CD14-positive monocyte (primary cell): ENCODE measurements at regions of chr9 and their contacts with region 1.

Region 1: GRCh38 chr9:297104-297972 is 82.7 kb downstream of the DOCK8 start:
- DNase-seq: peak; percentile 97 to 99 (median 98)
- H3K4me3 ChIP-seq: peak overlapping the region in 2 of 3 experiments; percentile 55 to 64
- H3K4me3 Mint-ChIP-seq: peak overlapping the region; percentile 80 to 88
- H3K27ac ChIP-seq: peak overlapping the region; percentile 94 to 95
- H3K27ac Mint-ChIP-seq: peak overlapping the region; percentile 97 to 100 (median 99)
- H3K4me1 ChIP-seq: peaks cover 44 to 49% of the 10 kb centered on the region in 2 donors
- H3K4me1 Mint-ChIP-seq: peaks cover 39% of the 10 kb centered on the region
- H3K27me3 ChIP-seq: no peaks in the 10 kb centered on the region
- H3K27me3 Mint-ChIP-seq: no peaks in the 10 kb centered on the region
- CTCF ChIP-seq: no peak

Region 2: GRCh38 chr9:214648-215493 is 82.5 kb before region 1 on chr9 and contains the start of gene DOCK8:
- intact Hi-C with region 1: loop called (anchors 5 kb)
- DNase-seq: peak; percentile 84 to 87 (median 86)
- H3K4me3 ChIP-seq: peak within 1 kb of the TSS; percentile 83 to 97 (median 86)
- H3K4me3 Mint-ChIP-seq: peak within 1 kb of the TSS; percentile 88 to 93
- H3K27ac ChIP-seq: peak within 1 kb of the TSS; percentile 94 to 95
- H3K27ac Mint-ChIP-seq: peak within 1 kb of the TSS in 6 of 7 donors; percentile 94 to 98 (median 97)
- H3K4me1 ChIP-seq: peaks cover 70 to 90% of the 10 kb centered on the region in 2 donors
- H3K4me1 Mint-ChIP-seq: peaks cover 45% of the 10 kb centered on the region
- H3K27me3 ChIP-seq: no peaks in the 10 kb centered on the region
- H3K27me3 Mint-ChIP-seq: no peaks in the 10 kb centered on the region
- CTCF ChIP-seq: peak; percentile 73
- polyA plus RNA-seq, gene DOCK8: 46.8 to 100 (median 95.4) TPM

Region 3: GRCh38 chr9:237858-238345 is 59.4 kb before region 1 on chr9:
- intact Hi-C with region 1: no loop called
- DNase-seq: no peak
- H3K4me3 ChIP-seq: no peak overlapping the region
- H3K4me3 Mint-ChIP-seq: no peak overlapping the region
- H3K27ac ChIP-seq: peak overlapping the region in 1 of 2 donors; percentile 64
- H3K27ac Mint-ChIP-seq: peak overlapping the region in 4 of 7 donors; percentile 5 to 66 (median 32)
- H3K4me1 ChIP-seq: peaks cover 0 to 5% of the 10 kb centered on the region in 2 donors
- H3K4me1 Mint-ChIP-seq: peaks cover 32% of the 10 kb centered on the region
- H3K27me3 ChIP-seq: no peaks in the 10 kb centered on the region
- H3K27me3 Mint-ChIP-seq: no peaks in the 10 kb centered on the region
- CTCF ChIP-seq: no peak

Region 4: GRCh38 chr9:257957-258356 is 39.4 kb before region 1 on chr9:
- intact Hi-C with region 1: loop called in 1 of 2 experiments (anchors 5 kb)
- DNase-seq: peak; percentile 82 to 93 (median 88)
- H3K4me3 ChIP-seq: peak overlapping the region in 1 of 3 experiments; percentile 38
- H3K4me3 Mint-ChIP-seq: peak overlapping the region in 1 of 2 donors; percentile 26
- H3K27ac ChIP-seq: peak overlapping the region; percentile 84 to 85
- H3K27ac Mint-ChIP-seq: peak overlapping the region; percentile 90 to 96 (median 95)
- H3K4me1 ChIP-seq: peaks cover 41 to 52% of the 10 kb centered on the region in 2 donors
- H3K4me1 Mint-ChIP-seq: peaks cover 65% of the 10 kb centered on the region
- H3K27me3 ChIP-seq: no peaks in the 10 kb centered on the region
- H3K27me3 Mint-ChIP-seq: no peaks in the 10 kb centered on the region
- CTCF ChIP-seq: no peak

Region 5: GRCh38 chr9:272251-273213 is 24.8 kb before region 1 on chr9:
- intact Hi-C with region 1: loop called in 1 of 2 experiments (anchors 1 kb)
- DNase-seq: peak; percentile 93 to 97 (median 95)
- H3K4me3 ChIP-seq: peak overlapping the region; percentile 36 to 71 (median 58)
- H3K4me3 Mint-ChIP-seq: peak overlapping the region; percentile 61 to 76
- H3K27ac ChIP-seq: peak overlapping the region; percentile 97 to 99
- H3K27ac Mint-ChIP-seq: peak overlapping the region; percentile 98 to 100 (median 99)
- H3K4me1 ChIP-seq: peaks cover 76 to 83% of the 10 kb centered on the region in 2 donors
- H3K4me1 Mint-ChIP-seq: peaks cover 75% of the 10 kb centered on the region
- H3K27me3 ChIP-seq: no peaks in the 10 kb centered on the region
- H3K27me3 Mint-ChIP-seq: peaks cover 0 to 2% (median 0%) of the 10 kb centered on the region in 3 donors
- CTCF ChIP-seq: no peak

Region 6: GRCh38 chr9:281741-282645 is 15.3 kb before region 1 on chr9:
- intact Hi-C with region 1: loop called in 1 of 2 experiments (anchors 2 kb)
- DNase-seq: peak; percentile 41 to 61 (median 50)
- H3K4me3 ChIP-seq: peak overlapping the region in 1 of 3 experiments; percentile 18
- H3K4me3 Mint-ChIP-seq: peak overlapping the region; percentile 11 to 31
- H3K27ac ChIP-seq: peak overlapping the region; percentile 55 to 85
- H3K27ac Mint-ChIP-seq: peak overlapping the region in 6 of 7 donors; percentile 88 to 97 (median 92)
- H3K4me1 ChIP-seq: peaks cover 48 to 66% of the 10 kb centered on the region in 2 donors
- H3K4me1 Mint-ChIP-seq: peaks cover 30% of the 10 kb centered on the region
- H3K27me3 ChIP-seq: no peaks in the 10 kb centered on the region
- H3K27me3 Mint-ChIP-seq: no peaks in the 10 kb centered on the region
- CTCF ChIP-seq: no peak